K562 (cell line): ENCODE measurements at regions of chr14 and their contacts with region 1.

Region 1: DNA sequence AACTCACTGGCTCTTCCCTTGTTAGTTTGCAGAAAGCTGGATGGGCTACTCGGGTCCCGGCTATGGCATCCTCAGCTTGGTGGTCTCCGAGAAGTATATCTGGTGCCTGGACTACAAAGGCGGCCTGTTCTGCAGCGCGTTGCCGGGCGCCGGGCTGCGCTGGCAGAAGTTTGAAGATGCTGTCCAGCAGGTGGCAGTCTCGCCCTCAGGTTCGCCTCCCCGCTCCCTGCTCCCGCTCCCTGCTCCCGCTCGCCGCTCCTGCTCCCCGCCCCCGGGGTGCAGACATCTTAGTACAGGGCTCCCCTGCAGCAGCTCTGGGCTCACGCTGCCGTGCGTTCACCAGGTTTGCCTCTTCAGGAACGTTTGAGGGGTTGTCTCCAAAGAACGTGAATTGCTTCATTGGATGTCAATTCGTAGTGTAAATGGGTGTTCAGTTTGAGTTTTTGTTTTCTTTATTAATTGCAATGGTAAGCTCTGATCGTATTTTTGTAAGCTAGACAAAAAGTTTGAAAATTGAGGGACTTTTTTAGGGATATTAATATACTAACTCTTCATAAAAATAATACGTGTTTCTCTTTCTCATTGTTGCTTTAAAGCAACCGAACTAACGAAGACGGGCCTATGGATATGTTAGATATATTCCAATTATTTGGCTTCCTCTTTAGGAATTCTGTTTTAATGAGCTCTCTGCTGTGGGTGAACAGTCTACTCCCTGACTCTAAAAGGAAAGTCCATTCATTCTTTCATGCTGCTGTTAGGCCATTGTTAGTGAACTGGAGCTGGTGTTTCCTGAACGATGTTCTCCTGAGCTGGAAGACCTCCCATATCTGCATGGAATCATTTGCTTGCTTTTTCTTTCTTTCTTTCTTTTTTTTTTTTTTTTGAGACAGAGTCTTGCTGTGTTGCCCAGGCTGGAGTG is 71.3 kb downstream of the ANKRD9 start:
- DNase-seq: peak; percentile 85 to 90 (median 86)
- ATAC-seq: peak; percentile 97
- H3K4me3 ChIP-seq: no peak overlapping the region
- H3K27ac ChIP-seq: no peak overlapping the region
- H3K4me1 ChIP-seq: peaks cover 7 to 8% of the 10 kb centered on the region in 2 experiments; a peak in 4 of 5 replicates
- H3K27me3 ChIP-seq: peaks cover 0 to 4% of the 10 kb centered on the region in 2 experiments; a peak in 1 of 5 replicates
- CTCF ChIP-seq: peak; percentile 77 to 78 (median 78)
- EP300 ChIP-seq: no peak
- POLR2A ChIP-seq: no peak
- RAD21 ChIP-seq: peak; percentile 90 to 93

Region 2: DNA sequence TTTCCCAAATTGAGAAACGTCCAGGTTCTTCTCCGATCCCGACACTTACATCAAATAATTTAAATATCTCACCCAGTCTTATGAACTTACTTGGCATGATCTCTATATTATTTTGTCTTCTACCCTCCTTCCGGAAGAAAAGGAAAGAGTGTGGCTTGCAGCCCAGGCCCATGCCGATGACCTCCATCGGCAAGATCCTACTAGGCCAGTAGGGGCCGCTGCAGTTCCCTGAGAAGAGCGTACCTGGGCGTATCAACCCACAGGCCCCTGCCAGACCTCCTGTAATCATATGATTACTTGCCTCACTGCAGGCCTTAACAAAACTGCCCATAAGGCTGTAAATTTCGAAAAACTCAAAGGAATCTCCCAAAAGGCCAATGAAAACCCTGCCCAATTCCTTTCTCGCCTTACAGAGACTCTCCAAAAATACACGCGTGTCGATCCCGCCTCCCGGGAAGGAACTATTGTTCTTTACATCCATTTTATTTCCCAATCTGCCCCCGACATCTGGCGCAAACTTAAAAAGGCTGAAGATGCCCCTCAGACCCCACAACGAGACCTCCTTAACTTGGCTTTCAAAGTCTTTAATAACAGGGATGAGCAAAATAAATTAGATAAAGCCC is 202.9 kb before region 1 on chr14:
- CTCF ChIA-PET with region 1: no interaction called
- POLR2A ChIA-PET with region 1: no interaction called
- in situ Hi-C with region 1: no loop called
- intact Hi-C with region 1: loop called (anchors 10 kb)
- DNase-seq: peak; percentile 82 to 86 (median 83)
- ATAC-seq: peak; percentile 99
- H3K4me3 ChIP-seq: no peak overlapping the region
- H3K27ac ChIP-seq: no peak overlapping the region
- H3K4me1 ChIP-seq: peaks cover 4 to 12% of the 10 kb centered on the region in 2 experiments; a peak in 3 of 5 replicates
- H3K27me3 ChIP-seq: no peaks in the 10 kb centered on the region
- CTCF ChIP-seq: peak; percentile 75 to 81 (median 80)
- EP300 ChIP-seq: no peak
- POLR2A ChIP-seq: no peak
- RAD21 ChIP-seq: peak; percentile 51 to 74

Region 3: DNA sequence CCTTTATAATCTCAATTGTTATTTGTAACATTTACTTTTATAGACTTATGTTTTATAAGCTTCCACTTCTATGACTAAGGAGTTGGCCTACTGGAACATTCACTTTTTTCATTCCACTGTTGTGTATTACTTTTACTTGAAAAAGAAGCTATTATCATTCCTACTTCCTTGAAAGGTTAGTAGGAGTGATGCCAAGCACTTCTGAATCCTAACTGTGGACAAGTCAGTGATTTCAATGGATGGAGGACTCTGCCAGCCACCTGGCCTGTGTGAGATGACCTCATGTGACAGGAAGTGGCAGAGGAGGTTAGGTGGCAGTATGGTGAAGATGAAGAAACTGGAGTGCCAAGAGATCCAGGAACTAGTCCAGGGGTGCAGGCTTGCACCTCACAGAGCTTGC is 29.5 kb before region 1 on chr14:
- CTCF ChIA-PET with region 1: no interaction called
- POLR2A ChIA-PET with region 1: no interaction called
- in situ Hi-C with region 1: no loop called
- intact Hi-C with region 1: no loop called
- DNase-seq: no peak
- ATAC-seq: no peak
- H3K4me3 ChIP-seq: no peak overlapping the region
- H3K27ac ChIP-seq: no peak overlapping the region
- H3K4me1 ChIP-seq: no peaks in the 10 kb centered on the region
- H3K27me3 ChIP-seq: no peaks in the 10 kb centered on the region
- CTCF ChIP-seq: no peak
- EP300 ChIP-seq: no peak
- POLR2A ChIP-seq: no peak
- RAD21 ChIP-seq: no peak

Region 4: GRCh38 chr14:102500158-102500662 is 62.0 kb after region 1 on chr14:
- CTCF ChIA-PET with region 1: no interaction called
- POLR2A ChIA-PET with region 1: interaction called, 4 read pairs
- in situ Hi-C with region 1: no loop called
- intact Hi-C with region 1: loop called (anchors 1 kb)
- DNase-seq: peak in 2 of 4 experiments; percentile 5 to 34
- ATAC-seq: no peak
- H3K4me3 ChIP-seq: no peak overlapping the region
- H3K27ac ChIP-seq: peak overlapping the region; percentile 61; the same call in 2 of the 3 replicates
- H3K4me1 ChIP-seq: peaks cover 30 to 72% of the 10 kb centered on the region in 2 experiments
- H3K27me3 ChIP-seq: no peaks in the 10 kb centered on the region
- CTCF ChIP-seq: no peak
- EP300 ChIP-seq: no peak
- POLR2A ChIP-seq: no peak
- RAD21 ChIP-seq: no peak

Region 5: DNA sequence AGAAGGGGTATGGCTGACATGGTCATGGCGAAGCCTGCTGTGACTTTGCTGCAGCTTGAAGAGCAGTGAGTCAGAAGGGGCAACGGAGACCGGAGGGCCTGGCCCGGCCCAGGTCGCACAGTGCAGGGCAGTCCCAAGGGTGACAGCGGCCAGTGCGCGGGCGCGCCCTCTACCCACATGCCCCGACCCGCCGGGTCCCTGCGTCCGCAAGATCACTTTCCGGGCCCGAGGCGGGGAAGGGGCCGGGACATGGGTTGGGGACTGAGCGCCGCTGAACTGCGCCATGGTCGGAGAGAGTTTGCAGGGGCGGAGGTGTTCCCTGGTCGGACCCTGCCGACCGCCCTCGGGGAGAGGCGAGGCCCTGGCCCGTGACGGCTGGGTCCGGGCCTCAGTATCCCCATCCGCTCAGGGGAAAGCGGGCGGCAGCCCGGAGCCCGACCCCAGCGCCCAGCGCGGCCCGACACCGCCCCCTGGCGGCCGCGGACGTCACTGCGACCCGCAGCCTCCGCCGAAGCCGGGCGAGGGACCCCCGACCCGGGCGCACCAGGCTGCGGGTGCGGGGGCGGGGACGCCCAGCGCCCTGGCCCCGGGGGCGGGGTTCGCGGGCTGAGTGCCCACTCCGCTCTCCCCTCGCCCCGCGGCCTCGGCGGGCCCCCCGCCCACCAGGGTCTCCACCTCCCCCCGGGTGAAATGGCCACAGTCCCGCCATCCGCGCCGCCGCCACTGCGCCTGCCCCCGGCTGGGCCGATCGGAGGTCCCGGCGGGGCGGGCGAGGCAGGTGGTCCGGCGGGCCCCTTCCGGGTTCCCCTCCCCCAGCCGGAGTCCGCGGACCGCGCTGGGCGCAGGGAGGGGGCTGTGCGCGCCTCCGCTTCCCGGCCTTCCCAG is 78.5 kb after region 1 on chr14:
- CTCF ChIA-PET with region 1: interaction called, 38 read pairs
- POLR2A ChIA-PET with region 1: no interaction called
- in situ Hi-C with region 1: loop called (anchors 5 kb)
- intact Hi-C with region 1: loop called (anchors 1 kb)
- DNase-seq: peak; percentile 51 to 78 (median 76)
- ATAC-seq: peak; percentile 88
- H3K4me3 ChIP-seq: peak overlapping the region; percentile 61
- H3K27ac ChIP-seq: peak overlapping the region; percentile 81
- H3K4me1 ChIP-seq: peaks cover 0 to 27% of the 10 kb centered on the region in 2 experiments; a peak in 2 of 5 replicates
- H3K27me3 ChIP-seq: no peaks in the 10 kb centered on the region
- CTCF ChIP-seq: peak; percentile 60 to 86 (median 71)
- EP300 ChIP-seq: no peak
- POLR2A ChIP-seq: no peak
- RAD21 ChIP-seq: peak; percentile 82 to 92

Region 6: GRCh38 chr14:102824832-102825231 is 386.6 kb after region 1 on chr14:
- CTCF ChIA-PET with region 1: no interaction called
- POLR2A ChIA-PET with region 1: no interaction called
- in situ Hi-C with region 1: no loop called
- intact Hi-C with region 1: no loop called
- DNase-seq: no peak
- ATAC-seq: no peak
- H3K4me3 ChIP-seq: no peak overlapping the region
- H3K27ac ChIP-seq: no peak overlapping the region
- H3K4me1 ChIP-seq: peaks cover 7 to 27% of the 10 kb centered on the region in 2 experiments; a peak in 3 of 5 replicates
- H3K27me3 ChIP-seq: no peaks in the 10 kb centered on the region
- CTCF ChIP-seq: no peak
- EP300 ChIP-seq: no peak
- POLR2A ChIP-seq: no peak
- RAD21 ChIP-seq: no peak

Region 7: GRCh38 chr14:102917469-102918211 is 479.4 kb after region 1 on chr14:
- CTCF ChIA-PET with region 1: no interaction called
- POLR2A ChIA-PET with region 1: no interaction called
- in situ Hi-C with region 1: loop called (anchors 10 kb)
- intact Hi-C with region 1: loop called (anchors 5 kb)
- DNase-seq: peak; percentile 55 to 72 (median 58)
- ATAC-seq: peak; percentile 72
- H3K4me3 ChIP-seq: no peak overlapping the region
- H3K27ac ChIP-seq: no peak overlapping the region
- H3K4me1 ChIP-seq: peaks cover 0 to 16% of the 10 kb centered on the region in 2 experiments; a peak in 2 of 5 replicates
- H3K27me3 ChIP-seq: peaks cover 0 to 8% of the 10 kb centered on the region in 2 experiments; a peak in 1 of 5 replicates
- CTCF ChIP-seq: peak; percentile 68 to 81 (median 69)
- EP300 ChIP-seq: no peak
- POLR2A ChIP-seq: no peak
- RAD21 ChIP-seq: peak; percentile 48 to 82